Activated B cell treated with CpG ODN at 0.5 μM for 24 hours (primary cell): ENCODE measurements at regions of chr15 and their contacts with region 1.

Region 1: DNA sequence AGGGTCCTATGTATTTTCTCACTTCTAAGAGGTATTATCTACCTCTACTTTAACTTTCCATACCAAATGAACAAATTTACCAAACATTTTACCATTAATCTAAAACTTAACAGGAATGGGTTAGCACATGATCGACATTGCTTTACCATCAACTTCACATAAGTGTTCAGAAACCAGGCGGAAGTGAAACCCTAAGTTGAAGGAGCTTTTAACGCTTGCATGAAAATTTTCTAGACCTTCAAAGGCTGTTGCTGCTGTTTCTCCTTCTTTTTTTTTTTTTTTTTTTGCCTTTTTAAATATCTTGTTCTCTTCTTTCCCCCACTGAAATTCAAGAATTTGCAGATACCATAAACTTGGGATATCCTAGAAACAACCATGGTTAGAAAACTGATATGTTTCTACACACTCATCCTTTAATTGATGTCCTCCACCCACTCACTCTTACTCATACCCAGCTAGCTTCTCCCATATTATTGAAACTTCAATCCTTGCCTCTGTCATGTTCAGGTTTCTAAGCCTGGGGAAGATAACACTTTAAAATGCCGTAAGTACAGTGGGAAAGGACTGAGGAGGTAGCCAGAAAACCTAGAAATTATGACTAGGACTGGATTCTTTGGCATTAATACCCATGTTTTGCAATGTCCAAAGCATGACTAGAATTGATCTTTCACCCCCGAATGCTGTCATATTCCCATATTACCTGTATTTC is 24.7 kb downstream of the MYO5A start:
- DNase-seq: no peak
- ATAC-seq: peak; percentile 94
- H3K4me3 Mint-ChIP-seq: peak overlapping the region; percentile 55
- H3K27ac Mint-ChIP-seq: peak overlapping the region; percentile 90
- H3K4me1 Mint-ChIP-seq: peaks cover 44% of the 10 kb centered on the region
- H3K27me3 Mint-ChIP-seq: no peaks in the 10 kb centered on the region
- CTCF ChIP-seq: no peak

Region 2: GRCh38 chr15:52427804-52428203 is 76.1 kb before region 1 on chr15:
- CTCF ChIA-PET with region 1: no interaction called
- POLR2A ChIA-PET with region 1: no interaction called
- intact Hi-C with region 1: no loop called
- DNase-seq: no peak
- ATAC-seq: no peak
- H3K4me3 Mint-ChIP-seq: no peak overlapping the region
- H3K27ac Mint-ChIP-seq: no peak overlapping the region
- H3K4me1 Mint-ChIP-seq: no peaks in the 10 kb centered on the region
- H3K27me3 Mint-ChIP-seq: no peaks in the 10 kb centered on the region
- CTCF ChIP-seq: no peak

Region 3: GRCh38 chr15:52481915-52482314 is 22.0 kb before region 1 on chr15:
- CTCF ChIA-PET with region 1: interaction called, 3 read pairs
- POLR2A ChIA-PET with region 1: interaction called, 3 read pairs
- intact Hi-C with region 1: loop called (anchors 2 kb)
- DNase-seq: no peak
- ATAC-seq: peak; percentile 99
- H3K4me3 Mint-ChIP-seq: peak overlapping the region; percentile 7
- H3K27ac Mint-ChIP-seq: peak overlapping the region; percentile 85
- H3K4me1 Mint-ChIP-seq: peaks cover 57% of the 10 kb centered on the region
- H3K27me3 Mint-ChIP-seq: no peaks in the 10 kb centered on the region
- CTCF ChIP-seq: no peak